Left lung (tissue), 14 donors: ENCODE measurements at regions of chr12 and their contacts with region 1.

Region 1: GRCh38 chr12:85029456-85029855 is 6.6 kb downstream of the TSPAN19 start:
- DNase-seq: peak in 2 of 4 donors; percentile 20 to 21
- ATAC-seq: peak; percentile 35
- H3K4me3 ChIP-seq: no peak overlapping the region
- H3K27ac ChIP-seq: no peak overlapping the region
- H3K4me1 ChIP-seq: no peaks in the 10 kb centered on the region
- H3K27me3 ChIP-seq: peaks cover 0 to 6% of the 10 kb centered on the region in 2 donors
- CTCF ChIP-seq: peak; percentile 27 to 43

Region 2: GRCh38 chr12:84551373-84551772 is 478.1 kb before region 1 on chr12:
- intact Hi-C with region 1: no loop called
- DNase-seq: no peak
- ATAC-seq: no peak
- H3K4me3 ChIP-seq: no peak overlapping the region
- H3K27ac ChIP-seq: no peak overlapping the region
- H3K4me1 ChIP-seq: no peaks in the 10 kb centered on the region
- H3K27me3 ChIP-seq: no peaks in the 10 kb centered on the region
- CTCF ChIP-seq: no peak

Region 3: GRCh38 chr12:84874825-84875139 is 154.7 kb before region 1 on chr12:
- intact Hi-C with region 1: loop called in 1 of 2 experiments (anchors 5 kb)
- DNase-seq: no peak
- ATAC-seq: no peak
- H3K4me3 ChIP-seq: no peak overlapping the region
- H3K27ac ChIP-seq: no peak overlapping the region
- H3K4me1 ChIP-seq: no peaks in the 10 kb centered on the region
- H3K27me3 ChIP-seq: peaks cover 0 to 4% of the 10 kb centered on the region in 2 donors
- CTCF ChIP-seq: no peak

Region 4: DNA sequence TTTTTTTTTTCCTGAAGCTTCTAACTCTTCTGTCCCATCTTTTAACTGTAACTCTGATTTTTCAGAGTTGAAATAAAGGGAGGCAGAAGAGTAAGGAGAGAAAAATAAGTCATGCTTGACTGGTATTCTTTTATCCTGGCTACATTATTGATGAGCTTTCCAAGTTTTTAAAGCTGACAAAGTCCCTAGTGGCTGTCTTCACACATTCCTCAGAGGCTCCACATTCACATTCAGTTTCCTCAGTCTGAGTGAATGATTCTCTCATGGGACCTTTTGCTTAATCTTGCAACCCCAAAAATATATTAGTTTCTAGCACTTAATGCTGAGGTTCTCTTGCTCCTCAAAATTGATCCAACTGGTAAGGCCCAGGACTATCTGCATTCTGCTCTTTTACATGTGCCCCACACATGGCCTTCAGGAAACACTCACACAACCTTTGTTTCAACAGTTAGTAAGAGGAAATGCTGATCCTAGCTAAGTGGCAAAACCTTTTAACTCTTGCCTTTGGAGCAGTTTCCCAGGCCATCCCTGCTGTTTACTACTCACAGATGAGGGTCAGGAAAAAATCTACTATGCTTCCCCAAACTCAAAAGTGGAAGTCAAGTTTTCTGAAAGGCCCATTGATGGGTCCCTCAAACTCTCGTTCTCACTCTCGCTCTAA is 55.2 kb before region 1 on chr12:
- intact Hi-C with region 1: no loop called
- DNase-seq: no peak
- ATAC-seq: no peak
- H3K4me3 ChIP-seq: no peak overlapping the region
- H3K27ac ChIP-seq: no peak overlapping the region
- H3K4me1 ChIP-seq: no peaks in the 10 kb centered on the region
- H3K27me3 ChIP-seq: no peaks in the 10 kb centered on the region
- CTCF ChIP-seq: no peak